Activated T-helper 1 cell treated with anti-CD3 and anti-CD28 coated beads, Interleukin-12 subunit alpha, Interleukin-12 subunit beta, Interleukin-2, Interleukin-4 antibody, amounts not matched to agents 30 ng/mL and 10 ng/mL and 1 ng/mL, durations not matched to agents 14 hours and 24 hours and 36 hours (primary cell): ENCODE measurements at regions of chr13 and their contacts with region 1.

Region 1: DNA sequence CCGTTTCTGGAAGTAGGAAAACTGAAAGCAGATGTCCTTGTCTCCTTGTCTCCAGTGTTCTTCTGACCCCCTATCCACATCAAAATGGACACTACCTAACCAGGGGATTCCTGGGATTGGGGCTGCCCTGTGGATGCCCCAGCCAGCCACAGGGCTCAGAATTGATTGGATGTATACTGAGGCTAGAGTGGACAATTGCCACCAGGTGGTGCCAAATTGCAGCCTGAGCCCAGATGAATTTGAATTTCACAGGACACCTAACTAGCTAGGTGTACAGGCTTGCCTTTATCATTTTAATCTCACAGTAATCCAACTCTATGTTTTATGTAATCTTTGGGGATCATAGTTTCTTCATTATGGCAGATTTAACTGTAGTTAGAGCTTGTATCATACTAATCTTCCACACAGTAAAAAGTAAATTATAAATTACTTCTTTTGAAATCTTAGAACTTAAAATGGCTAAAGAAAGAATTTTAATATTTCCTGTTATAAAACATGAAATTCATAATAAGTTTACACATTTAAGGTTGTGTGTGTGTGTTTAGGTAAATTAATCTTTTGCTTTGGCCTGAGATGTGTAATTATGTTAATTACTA is 58.0 kb downstream of the PIBF1 start:
- DNase-seq: peak; percentile 5
- H3K4me3 Mint-ChIP-seq: no peak overlapping the region
- H3K27ac Mint-ChIP-seq: no peak overlapping the region
- H3K4me1 Mint-ChIP-seq: no peaks in the 10 kb centered on the region
- H3K27me3 Mint-ChIP-seq: no peaks in the 10 kb centered on the region

Region 2: DNA sequence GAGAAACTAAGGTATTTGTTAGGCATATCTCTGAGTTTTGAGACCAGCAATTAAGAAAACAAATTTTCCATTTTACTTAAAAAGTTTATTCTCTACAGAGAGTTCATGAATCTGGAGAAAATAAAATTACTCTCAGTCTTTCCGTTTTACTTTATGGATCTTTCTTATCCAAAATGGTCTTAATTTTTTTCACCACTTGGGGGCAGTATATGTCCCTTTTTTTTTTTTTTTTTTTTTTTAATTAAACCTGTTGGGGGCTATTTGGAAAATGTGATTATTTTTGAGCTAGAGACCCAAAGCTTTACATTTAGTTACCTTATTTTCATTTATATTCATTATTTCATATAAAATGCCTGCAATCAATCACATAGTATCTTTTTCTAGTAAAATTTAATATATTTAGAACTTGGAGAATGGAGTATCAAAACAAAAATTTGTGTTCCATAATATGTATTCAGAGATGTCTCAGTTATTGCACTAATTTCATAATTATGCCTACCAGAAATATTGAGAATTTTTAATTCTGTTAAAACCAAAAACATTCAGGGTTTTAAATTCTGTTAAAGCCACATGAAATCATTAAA is 30.9 kb before region 1 on chr13:
- intact Hi-C with region 1: no loop called
- DNase-seq: no peak
- H3K4me3 Mint-ChIP-seq: no peak overlapping the region
- H3K27ac Mint-ChIP-seq: no peak overlapping the region
- H3K4me1 Mint-ChIP-seq: no peaks in the 10 kb centered on the region
- H3K27me3 Mint-ChIP-seq: no peaks in the 10 kb centered on the region

Region 3: GRCh38 chr13:73058736-73059459 is 219.0 kb after region 1 on chr13 and contains the start of gene KLF5:
- intact Hi-C with region 1: loop called (anchors 2 kb)
- DNase-seq: peak; percentile 97
- H3K4me3 Mint-ChIP-seq: peak within 1 kb of the TSS; percentile 82
- H3K27ac Mint-ChIP-seq: peak within 1 kb of the TSS; percentile 74
- H3K4me1 Mint-ChIP-seq: peaks cover 20% of the 10 kb centered on the region
- H3K27me3 Mint-ChIP-seq: peaks cover 51% of the 10 kb centered on the region
- total RNA-seq, gene KLF5: 2.4 and 2.5 TPM in 2 replicates

Region 4: GRCh38 chr13:73417015-73417623 is 577.2 kb after region 1 on chr13:
- intact Hi-C with region 1: loop called (anchors 10 kb)
- DNase-seq: no peak
- H3K4me3 Mint-ChIP-seq: no peak overlapping the region
- H3K27ac Mint-ChIP-seq: no peak overlapping the region
- H3K4me1 Mint-ChIP-seq: no peaks in the 10 kb centered on the region
- H3K27me3 Mint-ChIP-seq: no peaks in the 10 kb centered on the region